Activated CD4-positive, alpha-beta memory T cell treated with anti-CD3 and anti-CD28 coated beads, Interleukin-2, amount 10 ng/mL, durations not matched to agents 7 days and 5 days (primary cell): ENCODE measurements at regions of chr19 and their contacts with region 1.

Region 1: GRCh38 chr19:50537762-50538230 is 24.1 kb upstream of the ASPDH start:
- DNase-seq: peak; percentile 65
- H3K4me3 Mint-ChIP-seq: no peak overlapping the region
- H3K27ac Mint-ChIP-seq: no peak overlapping the region
- H3K4me1 Mint-ChIP-seq: no peaks in the 10 kb centered on the region
- H3K27me3 Mint-ChIP-seq: peaks cover 6% of the 10 kb centered on the region

Region 2: DNA sequence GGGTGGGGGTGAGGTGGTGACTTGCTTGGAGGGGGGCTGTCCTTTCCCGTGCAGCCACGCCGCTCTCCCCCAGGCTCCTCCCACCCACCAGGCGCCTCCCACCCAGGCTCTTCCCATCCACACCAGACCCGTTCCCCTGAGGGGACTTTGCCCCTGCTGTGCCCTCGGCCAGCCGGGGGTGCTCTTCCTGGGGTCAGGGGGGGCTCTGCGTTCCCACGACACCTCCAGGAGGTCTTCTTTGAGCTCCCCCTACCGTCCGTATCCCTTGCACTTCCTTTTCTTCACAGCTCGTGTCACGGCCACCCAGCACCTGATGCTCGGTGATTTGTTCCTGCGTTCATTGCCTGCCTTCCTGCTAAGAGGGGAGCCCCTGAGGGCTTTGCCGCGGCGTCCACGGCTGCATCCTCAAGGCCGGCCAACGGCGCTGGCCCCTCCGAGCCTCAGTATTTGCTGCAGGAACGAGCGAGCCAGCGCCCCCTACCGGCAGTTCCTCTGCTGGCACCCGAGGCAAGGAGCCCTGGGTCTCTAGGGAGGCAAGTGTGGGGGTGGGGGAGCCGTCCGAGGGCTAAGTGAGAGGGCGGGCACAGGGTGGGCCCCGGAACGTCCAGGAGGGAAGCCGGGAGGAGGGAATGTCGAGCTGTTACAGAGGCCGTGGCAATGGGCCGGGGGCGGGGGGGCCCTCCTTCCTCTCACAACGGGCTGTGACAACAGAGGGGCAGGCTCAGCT is 18.6 kb after region 1 on chr19:
- CTCF ChIA-PET with region 1: interaction called, 26 read pairs
- POLR2A ChIA-PET with region 1: no interaction called
- DNase-seq: peak; percentile 81
- H3K4me3 Mint-ChIP-seq: peak overlapping the region; percentile 80
- H3K27ac Mint-ChIP-seq: no peak overlapping the region
- H3K4me1 Mint-ChIP-seq: peaks cover 10% of the 10 kb centered on the region
- H3K27me3 Mint-ChIP-seq: peaks cover 38% of the 10 kb centered on the region